ENCODE measurements at regions of chr9 and their contacts with region 1.

Region 1: GRCh38 chr9:83980395-83981125 is at the start of gene RMI1:
- DNase-seq: peak; percentile 95
- ATAC-seq: peak; percentile 80
- H3K4me3 Mint-ChIP-seq: peak within 1 kb of the TSS; percentile 99
- H3K27ac Mint-ChIP-seq: peak within 1 kb of the TSS; percentile 100
- H3K4me1 Mint-ChIP-seq: peaks cover 42% of the 10 kb centered on the region
- H3K27me3 Mint-ChIP-seq: no peaks in the 10 kb centered on the region
- CTCF ChIP-seq: no peak
- total RNA-seq, gene RMI1: 6.6 and 8.5 TPM in 2 replicates

Region 2: DNA sequence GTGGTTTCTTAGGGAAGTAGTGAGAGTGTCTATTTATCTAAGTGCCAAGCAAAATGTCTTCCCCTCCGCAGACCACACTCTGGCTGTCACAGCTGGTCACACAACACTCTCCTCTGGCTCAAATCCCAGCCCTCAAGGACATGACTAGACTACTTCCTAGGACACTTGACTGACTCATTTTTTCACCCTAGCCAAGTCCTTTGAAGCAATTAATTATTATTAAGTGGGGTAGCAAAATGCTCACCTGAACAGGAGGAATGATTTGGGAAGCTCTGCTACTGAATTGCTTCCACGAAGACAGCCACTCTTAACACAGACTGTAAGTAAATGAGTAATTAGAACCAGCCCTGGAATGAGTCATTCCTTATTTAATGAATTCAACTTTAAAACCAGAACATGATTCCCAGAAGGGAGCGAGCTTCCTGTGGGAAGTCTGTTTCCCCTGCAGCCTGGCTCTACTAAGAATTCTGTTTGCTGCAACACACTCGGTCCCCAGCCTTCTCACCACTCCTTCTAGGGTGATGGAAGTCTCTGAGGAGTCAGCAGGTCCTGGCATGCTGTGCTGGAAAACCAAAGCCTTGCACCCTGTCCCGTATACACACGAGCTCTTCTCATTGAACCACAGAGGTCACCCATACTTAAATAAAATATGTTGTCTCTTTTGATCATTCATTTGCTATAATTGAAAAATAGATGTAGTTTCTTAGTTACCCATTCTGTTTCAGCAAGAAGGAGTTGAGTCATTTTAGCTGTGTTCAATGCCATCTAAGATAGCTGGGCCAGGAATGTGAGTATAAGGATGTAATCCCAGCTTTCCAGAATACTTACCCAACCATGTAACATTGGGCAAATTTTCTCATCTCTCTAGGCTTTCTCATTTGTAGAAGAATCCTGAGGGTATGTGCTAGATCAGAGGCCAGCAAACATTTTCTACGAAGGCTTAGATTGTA is 699.0 kb before region 1 on chr9:
- CTCF ChIA-PET with region 1: no interaction called
- POLR2A ChIA-PET with region 1: no interaction called
- intact Hi-C with region 1: no loop called
- DNase-seq: no peak
- ATAC-seq: no peak
- H3K4me3 Mint-ChIP-seq: no peak overlapping the region
- H3K27ac Mint-ChIP-seq: no peak overlapping the region
- H3K4me1 Mint-ChIP-seq: no peaks in the 10 kb centered on the region
- H3K27me3 Mint-ChIP-seq: no peaks in the 10 kb centered on the region
- CTCF ChIP-seq: no peak

Region 3: DNA sequence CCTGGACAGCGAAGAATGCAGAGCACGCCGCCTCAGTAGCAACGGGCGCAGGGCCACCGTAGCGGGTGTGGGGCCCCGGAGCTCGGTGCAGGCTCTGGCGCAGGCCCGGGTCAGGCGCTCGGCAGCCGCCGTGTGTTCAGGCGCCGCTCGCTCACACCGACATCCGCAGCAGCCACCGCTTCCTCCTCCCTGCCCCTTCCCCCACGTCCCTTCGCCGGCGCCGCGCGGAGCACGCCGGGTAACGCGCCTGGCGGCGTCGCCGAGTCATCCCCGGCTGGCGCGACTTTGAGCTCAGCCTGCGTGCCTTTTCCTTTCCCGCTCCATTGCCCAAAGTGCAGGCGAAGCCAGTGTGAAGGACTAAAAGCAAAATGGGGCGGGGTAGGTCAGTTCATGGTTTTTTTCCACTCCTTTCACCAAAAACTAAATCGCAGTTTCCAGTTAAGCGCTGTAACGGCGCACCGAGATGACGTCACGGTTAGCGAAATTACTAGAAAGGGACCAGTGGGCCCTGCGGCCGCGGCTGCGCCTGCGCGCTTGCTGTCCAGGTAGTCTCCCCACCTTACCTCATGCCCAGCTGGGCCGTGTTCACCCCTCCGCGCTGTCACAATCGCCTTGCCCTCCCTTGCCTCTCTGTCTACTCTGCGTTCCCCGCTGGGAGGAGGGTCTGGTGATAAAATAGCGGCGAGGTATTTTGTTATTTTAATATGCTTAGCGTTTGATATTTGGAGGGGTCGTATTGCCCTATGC is 272.6 kb before region 1 on chr9 and contains the start of gene UBQLN1:
- CTCF ChIA-PET with region 1: no interaction called
- POLR2A ChIA-PET with region 1: interaction called, 18 read pairs
- intact Hi-C with region 1: loop called (anchors 1 kb)
- DNase-seq: peak; percentile 92
- ATAC-seq: peak; percentile 85
- H3K4me3 Mint-ChIP-seq: peak within 1 kb of the TSS; percentile 99
- H3K27ac Mint-ChIP-seq: peak within 1 kb of the TSS; percentile 99
- H3K4me1 Mint-ChIP-seq: peaks cover 36% of the 10 kb centered on the region
- H3K27me3 Mint-ChIP-seq: no peaks in the 10 kb centered on the region
- CTCF ChIP-seq: no peak
- total RNA-seq, gene UBQLN1: 84.4 and 96.8 TPM in 2 replicates

Region 4: DNA sequence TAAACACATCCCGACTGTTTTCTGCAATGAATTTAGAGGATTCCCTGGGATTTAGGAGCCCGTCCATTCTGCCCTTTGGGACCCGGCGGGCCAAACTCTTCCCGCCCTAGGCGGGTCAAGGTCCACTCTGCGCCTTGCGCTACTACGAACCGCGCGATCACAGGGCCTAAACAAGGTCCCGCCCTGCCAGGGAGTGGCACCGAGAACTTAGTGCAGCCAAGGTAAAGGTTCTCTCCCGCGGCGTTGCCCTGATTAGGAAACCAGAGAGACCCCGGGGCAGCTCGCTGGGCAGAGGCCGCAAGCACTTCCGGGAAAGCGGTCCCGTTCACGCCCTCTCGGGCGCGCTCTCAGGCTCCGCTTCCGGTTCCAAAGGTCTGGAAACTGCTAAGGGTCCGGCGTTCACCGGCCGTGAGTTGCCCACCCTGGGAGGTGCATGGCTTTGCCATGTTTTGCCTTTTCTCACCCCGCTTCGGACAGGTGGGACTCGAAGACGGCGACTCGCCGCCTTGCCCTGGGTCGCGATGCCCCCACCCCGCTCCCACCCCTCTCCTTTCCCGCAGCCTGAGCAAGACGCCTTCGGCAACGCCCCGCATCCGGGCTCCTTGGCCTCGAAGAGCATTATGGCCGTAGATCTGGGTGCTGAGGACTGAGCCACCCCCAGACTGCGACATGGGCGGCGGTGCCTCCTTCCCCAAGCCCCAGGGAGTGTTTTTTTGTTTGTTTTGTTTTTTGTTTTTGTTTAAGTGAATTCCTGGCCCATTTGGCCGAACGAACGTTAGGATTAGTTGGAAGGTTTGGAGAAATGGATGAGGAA is 23.9 kb before region 1 on chr9:
- CTCF ChIA-PET with region 1: interaction called, 4 read pairs
- POLR2A ChIA-PET with region 1: interaction called, 45 read pairs
- intact Hi-C with region 1: loop called (anchors 1 kb)
- DNase-seq: peak; percentile 62
- ATAC-seq: peak; percentile 84
- H3K4me3 Mint-ChIP-seq: peak overlapping the region; percentile 97
- H3K27ac Mint-ChIP-seq: peak overlapping the region; percentile 94
- H3K4me1 Mint-ChIP-seq: peaks cover 19% of the 10 kb centered on the region
- H3K27me3 Mint-ChIP-seq: no peaks in the 10 kb centered on the region
- CTCF ChIP-seq: no peak

Region 5: GRCh38 chr9:84139296-84140070 is 158.9 kb after region 1 on chr9:
- CTCF ChIA-PET with region 1: no interaction called
- POLR2A ChIA-PET with region 1: no interaction called
- intact Hi-C with region 1: no loop called
- DNase-seq: no peak
- ATAC-seq: no peak
- H3K4me3 Mint-ChIP-seq: peak overlapping the region; percentile 83
- H3K27ac Mint-ChIP-seq: no peak overlapping the region
- H3K4me1 Mint-ChIP-seq: peaks cover 10% of the 10 kb centered on the region
- H3K27me3 Mint-ChIP-seq: peaks cover 38% of the 10 kb centered on the region
- CTCF ChIP-seq: no peak

Region 6: GRCh38 chr9:84163052-84163650 is 182.6 kb after region 1 on chr9:
- CTCF ChIA-PET with region 1: no interaction called
- POLR2A ChIA-PET with region 1: no interaction called
- intact Hi-C with region 1: no loop called
- DNase-seq: no peak
- ATAC-seq: no peak
- H3K4me3 Mint-ChIP-seq: no peak overlapping the region
- H3K27ac Mint-ChIP-seq: no peak overlapping the region
- H3K4me1 Mint-ChIP-seq: no peaks in the 10 kb centered on the region
- H3K27me3 Mint-ChIP-seq: peaks cover 18% of the 10 kb centered on the region
- CTCF ChIP-seq: no peak

Region 7: DNA sequence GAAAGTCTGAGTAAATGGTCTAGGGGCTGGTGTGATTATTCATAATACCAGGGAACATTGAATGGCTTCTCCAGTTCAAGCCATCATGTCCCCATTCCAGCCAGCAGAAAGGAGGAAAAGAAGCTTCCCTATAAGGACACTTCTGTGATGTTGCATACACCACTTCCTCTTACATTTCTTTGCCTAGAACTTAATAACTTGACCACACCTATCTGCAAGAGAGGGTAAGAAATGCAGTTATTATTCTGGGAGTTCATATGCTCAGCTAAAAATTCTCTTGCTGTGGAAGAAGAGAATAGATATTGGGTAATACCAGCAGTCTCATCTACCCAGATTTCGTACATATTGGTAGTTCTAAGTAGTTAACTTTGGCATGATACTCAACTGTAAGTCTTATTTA is 193.9 kb after region 1 on chr9:
- CTCF ChIA-PET with region 1: interaction called, 4 read pairs
- POLR2A ChIA-PET with region 1: no interaction called
- intact Hi-C with region 1: loop called (anchors 2 kb)
- DNase-seq: no peak
- ATAC-seq: no peak
- H3K4me3 Mint-ChIP-seq: no peak overlapping the region
- H3K27ac Mint-ChIP-seq: no peak overlapping the region
- H3K4me1 Mint-ChIP-seq: no peaks in the 10 kb centered on the region
- H3K27me3 Mint-ChIP-seq: peaks cover 4% of the 10 kb centered on the region
- CTCF ChIP-seq: no peak

Region 8: GRCh38 chr9:85741875-85742629 is 1761.5 kb after region 1 on chr9 and contains the start of gene AGTPBP1:
- CTCF ChIA-PET with region 1: no interaction called
- POLR2A ChIA-PET with region 1: no interaction called
- intact Hi-C with region 1: loop called (anchors 2 kb)
- DNase-seq: peak; percentile 99
- ATAC-seq: peak; percentile 92
- H3K4me3 Mint-ChIP-seq: peak within 1 kb of the TSS; percentile 93
- H3K27ac Mint-ChIP-seq: peak within 1 kb of the TSS; percentile 90
- H3K4me1 Mint-ChIP-seq: peaks cover 22% of the 10 kb centered on the region
- H3K27me3 Mint-ChIP-seq: peaks cover 8% of the 10 kb centered on the region
- CTCF ChIP-seq: no peak
- total RNA-seq, gene AGTPBP1: 25.9 and 26.7 TPM in 2 replicates

Measured in activated B cell treated with CpG ODN at 0.5 μM for 24 hours (primary cell).